A673 (cell line): ENCODE measurements at regions of chr7 and their contacts with region 1.

Region 1: DNA sequence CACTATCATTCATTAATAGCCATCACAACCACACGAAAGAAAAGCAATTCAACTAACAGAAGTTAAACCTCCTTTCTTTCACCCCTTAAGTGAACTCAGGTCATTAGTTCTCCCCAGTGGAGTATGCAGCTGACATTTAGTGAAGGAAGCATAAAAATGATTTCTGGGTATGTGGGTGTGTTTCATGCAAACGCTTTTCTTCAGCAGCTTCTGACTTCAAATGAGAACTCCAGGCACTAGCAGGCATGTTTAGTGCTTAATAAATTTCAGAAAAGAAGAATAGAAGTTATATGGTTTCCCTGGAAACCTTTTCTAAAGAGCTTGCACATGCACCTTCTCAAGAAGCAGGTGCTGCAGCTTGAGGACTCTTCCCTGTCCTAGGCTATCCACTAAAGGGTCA is 62.5 kb downstream of the PIK3CG start:
- DNase-seq: no peak
- H3K4me3 ChIP-seq: no peak overlapping the region
- H3K27ac ChIP-seq: no peak overlapping the region
- H3K4me1 ChIP-seq: no peaks in the 10 kb centered on the region
- H3K27me3 ChIP-seq: no peaks in the 10 kb centered on the region
- CTCF ChIP-seq: no peak

Region 2: DNA sequence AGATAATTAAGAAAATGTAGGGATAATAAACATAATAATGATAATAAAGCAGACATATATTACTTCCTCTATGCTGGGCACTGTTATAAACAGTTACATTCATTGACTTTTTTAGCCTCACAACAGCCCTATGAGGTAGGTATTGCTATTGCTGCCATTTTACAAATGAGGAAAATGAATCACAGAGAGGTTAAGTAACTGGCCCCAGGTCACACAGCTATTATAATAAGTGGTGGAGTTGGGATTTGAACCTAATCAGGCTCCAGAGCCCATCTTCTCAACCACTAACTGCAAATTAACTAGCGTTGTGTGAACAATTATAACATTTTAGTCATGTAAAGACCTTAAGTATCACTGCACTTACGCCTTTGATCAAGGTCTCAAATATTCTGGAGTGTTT is 124.9 kb before region 1 on chr7:
- CTCF ChIA-PET with region 1: no interaction called
- POLR2A ChIA-PET with region 1: no interaction called
- intact Hi-C with region 1: loop called (anchors 5 kb)
- DNase-seq: no peak
- H3K4me3 ChIP-seq: no peak overlapping the region
- H3K27ac ChIP-seq: no peak overlapping the region
- H3K4me1 ChIP-seq: no peaks in the 10 kb centered on the region
- H3K27me3 ChIP-seq: no peaks in the 10 kb centered on the region
- CTCF ChIP-seq: no peak